ENCODE measurements at regions of chr2 and their contacts with region 1.

Region 1: GRCh38 chr2:235135990-235136561 is 184.3 kb downstream of the SH3BP4 start:
- DNase-seq: peak; percentile 88 to 93 (median 88)
- ATAC-seq: peak; percentile 82 to 89
- H3K4me3 ChIP-seq: no peak overlapping the region
- H3K27ac ChIP-seq: no peak overlapping the region
- H3K4me1 ChIP-seq: no peaks in the 10 kb centered on the region
- H3K27me3 ChIP-seq: no peaks in the 10 kb centered on the region

Region 2: GRCh38 chr2:235740821-235741220 is 604.7 kb after region 1 on chr2:
- intact Hi-C with region 1: loop called (anchors 5 to 10 kb)
- DNase-seq: no peak
- ATAC-seq: no peak
- H3K4me3 ChIP-seq: no peak overlapping the region
- H3K27ac ChIP-seq: no peak overlapping the region
- H3K4me1 ChIP-seq: no peaks in the 10 kb centered on the region
- H3K27me3 ChIP-seq: no peaks in the 10 kb centered on the region

Region 3: GRCh38 chr2:235746257-235747084 is 610.4 kb after region 1 on chr2:
- intact Hi-C with region 1: loop called (anchors 5 to 10 kb)
- DNase-seq: peak; percentile 47 to 78 (median 62)
- ATAC-seq: peak; percentile 91
- H3K4me3 ChIP-seq: no peak overlapping the region
- H3K27ac ChIP-seq: no peak overlapping the region
- H3K4me1 ChIP-seq: no peaks in the 10 kb centered on the region
- H3K27me3 ChIP-seq: no peaks in the 10 kb centered on the region